Naive thymus-derived CD4-positive, alpha-beta T cell (primary cell): ENCODE measurements at regions of chr14 and their contacts with region 1.

Region 1: GRCh38 chr14:24442273-24443052 is at the start of gene SDR39U1:
- DNase-seq: peak; percentile 81 to 99 (median 98)
- ATAC-seq: peak; percentile 93
- H3K4me3 ChIP-seq: peak within 1 kb of the TSS; percentile 85
- H3K4me3 Mint-ChIP-seq: peak within 1 kb of the TSS; percentile 91 to 98 (median 95)
- H3K27ac ChIP-seq: peak within 1 kb of the TSS; percentile 98
- H3K27ac Mint-ChIP-seq: peak within 1 kb of the TSS; percentile 92 to 99 (median 98)
- H3K4me1 ChIP-seq: peaks cover 20 to 32% of the 10 kb centered on the region in 2 donors
- H3K4me1 Mint-ChIP-seq: peaks cover 27 to 57% (median 49%) of the 10 kb centered on the region in 7 donors
- H3K27me3 ChIP-seq: no peaks in the 10 kb centered on the region
- H3K27me3 Mint-ChIP-seq: peaks cover 0 to 3% (median 0%) of the 10 kb centered on the region in 5 donors
- total RNA-seq, gene SDR39U1: 64.7 to 137 (median 96.2) TPM

Region 2: DNA sequence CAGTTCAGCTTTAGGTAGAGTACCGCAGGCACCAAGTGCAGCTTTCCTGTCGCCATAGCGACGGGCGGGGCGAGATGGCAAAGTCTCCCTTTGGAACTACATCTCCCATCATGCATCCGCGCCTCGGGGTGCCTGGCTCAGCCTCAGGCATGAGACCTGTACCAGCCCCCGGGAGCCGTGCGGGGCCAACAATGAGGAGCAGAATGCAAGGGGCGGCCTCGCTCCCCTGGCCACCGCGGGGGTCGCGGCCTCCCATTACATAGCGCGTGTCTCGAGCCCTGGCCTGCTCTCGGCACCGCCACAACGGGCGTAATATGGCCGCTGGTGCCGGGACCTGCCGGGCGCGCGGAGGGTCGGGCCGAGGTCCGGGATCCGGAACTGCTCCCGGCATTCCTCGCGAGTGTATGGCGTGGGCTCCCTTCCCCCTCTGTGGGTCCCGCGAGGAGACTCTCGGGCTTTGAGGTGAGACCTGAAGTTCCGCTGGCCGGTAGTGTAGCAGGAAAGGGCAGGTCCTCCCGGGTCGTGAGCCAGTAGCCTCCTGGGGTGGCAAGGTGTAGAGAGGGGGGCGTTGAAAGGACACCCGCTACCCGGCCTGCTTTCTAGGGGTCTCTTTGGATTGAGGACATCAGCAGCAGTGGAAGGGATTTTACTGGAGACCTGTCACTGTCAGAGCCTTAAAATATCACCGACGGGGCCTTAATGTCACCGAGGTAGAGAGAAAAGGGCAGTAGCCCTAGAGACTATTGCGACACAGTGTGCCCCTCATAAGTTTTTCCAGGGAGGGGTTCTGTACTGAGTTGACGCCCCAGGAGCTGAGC is 886.4 kb before region 1 on chr14 and contains the start of gene THTPA:
- CTCF ChIA-PET with region 1: no interaction called
- POLR2A ChIA-PET with region 1: no interaction called
- intact Hi-C with region 1: loop called (anchors 2 to 10 kb)
- DNase-seq: peak; percentile 84 to 96 (median 89)
- ATAC-seq: peak; percentile 94
- H3K4me3 ChIP-seq: peak within 1 kb of the TSS; percentile 84
- H3K4me3 Mint-ChIP-seq: peak within 1 kb of the TSS; percentile 80 to 99 (median 96)
- H3K27ac ChIP-seq: peak within 1 kb of the TSS; percentile 83
- H3K27ac Mint-ChIP-seq: peak within 1 kb of the TSS; percentile 78 to 97 (median 94)
- H3K4me1 ChIP-seq: peaks cover 10 to 16% of the 10 kb centered on the region in 2 donors
- H3K4me1 Mint-ChIP-seq: peaks cover 18 to 45% (median 38%) of the 10 kb centered on the region in 7 donors
- H3K27me3 ChIP-seq: no peaks in the 10 kb centered on the region
- H3K27me3 Mint-ChIP-seq: peaks cover 0 to under 1% (median 0%) of the 10 kb centered on the region in 5 donors
- total RNA-seq, gene THTPA: 16.4 to 26.7 (median 19.2) TPM

Region 3: DNA sequence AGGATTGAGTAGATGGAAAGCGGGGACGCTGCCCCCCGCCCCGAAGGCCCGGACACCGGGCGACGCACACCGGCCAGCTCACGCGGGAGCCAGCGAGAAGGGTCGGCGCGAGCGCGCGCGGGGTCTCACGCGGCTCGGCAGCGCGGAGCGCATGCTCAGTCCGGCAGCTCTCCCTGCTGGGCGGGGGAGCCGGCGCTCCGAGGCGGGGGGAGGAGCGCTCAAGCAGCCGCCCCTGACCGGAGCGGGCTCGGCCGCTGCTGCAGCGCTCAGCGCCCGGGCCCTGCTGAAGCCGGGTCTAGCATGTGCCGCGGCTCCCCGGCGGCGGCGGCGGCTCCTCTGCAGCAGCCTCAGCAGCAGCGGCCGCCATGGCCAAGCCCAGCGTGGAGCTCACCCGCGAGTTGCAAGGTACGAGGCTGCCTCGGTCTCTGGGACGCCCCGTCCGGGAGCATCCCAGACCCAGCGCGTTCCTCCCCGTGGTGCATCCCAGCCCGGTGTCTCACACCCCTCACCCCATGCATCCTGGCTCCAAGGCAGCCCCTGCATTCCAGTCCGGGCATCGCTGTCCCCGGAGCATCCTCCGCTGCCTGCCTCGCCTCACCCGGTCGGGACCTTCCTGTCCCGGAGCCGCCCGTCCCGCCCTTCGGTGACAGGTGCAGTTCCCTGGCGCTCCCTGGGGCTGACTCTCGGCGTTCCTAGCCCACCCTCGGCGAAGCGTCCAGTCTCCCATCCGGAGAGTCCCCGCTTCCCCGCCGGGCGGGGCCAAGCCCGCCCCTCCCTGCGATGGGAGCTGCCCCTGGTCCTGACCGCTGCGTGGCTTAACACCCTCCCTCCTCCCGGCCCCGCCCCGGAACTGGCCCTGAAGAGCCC is 390.4 kb before region 1 on chr14 and contains the start of gene CARMIL3:
- CTCF ChIA-PET with region 1: no interaction called
- POLR2A ChIA-PET with region 1: no interaction called
- intact Hi-C with region 1: no loop called
- DNase-seq: peak; percentile 28 to 78 (median 47)
- ATAC-seq: peak; percentile 79
- H3K4me3 ChIP-seq: peak within 1 kb of the TSS; percentile 63
- H3K4me3 Mint-ChIP-seq: peak within 1 kb of the TSS; percentile 81 to 91 (median 87)
- H3K27ac ChIP-seq: peak within 1 kb of the TSS; percentile 53
- H3K27ac Mint-ChIP-seq: peak within 1 kb of the TSS in 6 of 9 donors; percentile 46 to 67 (median 56)
- H3K4me1 ChIP-seq: peaks cover 0 to 8% of the 10 kb centered on the region in 2 donors
- H3K4me1 Mint-ChIP-seq: peaks cover 8 to 17% (median 14%) of the 10 kb centered on the region in 7 donors
- H3K27me3 ChIP-seq: no peaks in the 10 kb centered on the region
- H3K27me3 Mint-ChIP-seq: peaks cover 12 to 44% (median 19%) of the 10 kb centered on the region in 5 donors
- total RNA-seq, gene CARMIL3: 0.08 to 1.7 (median 0.27) TPM

Region 4: GRCh38 chr14:24146978-24147760 is 295.3 kb before region 1 on chr14 and contains the start of gene RNF31:
- CTCF ChIA-PET with region 1: no interaction called
- POLR2A ChIA-PET with region 1: no interaction called
- intact Hi-C with region 1: loop called in 1 of 2 experiments (anchors 2 kb)
- DNase-seq: peak; percentile 88 to 98 (median 96)
- ATAC-seq: peak; percentile 95
- H3K4me3 ChIP-seq: peak within 1 kb of the TSS; percentile 98
- H3K4me3 Mint-ChIP-seq: peak within 1 kb of the TSS; percentile 91 to 100 (median 98)
- H3K27ac ChIP-seq: peak within 1 kb of the TSS; percentile 88
- H3K27ac Mint-ChIP-seq: peak within 1 kb of the TSS; percentile 94 to 98 (median 96)
- H3K4me1 ChIP-seq: peaks cover 35 to 47% of the 10 kb centered on the region in 2 donors
- H3K4me1 Mint-ChIP-seq: peaks cover 39 to 73% (median 61%) of the 10 kb centered on the region in 7 donors
- H3K27me3 ChIP-seq: no peaks in the 10 kb centered on the region
- H3K27me3 Mint-ChIP-seq: no peaks in the 10 kb centered on the region
- total RNA-seq, gene RNF31: 64.0 to 151 (median 95.4) TPM

Region 5: GRCh38 chr14:24241829-24242443 is 200.5 kb before region 1 on chr14:
- CTCF ChIA-PET with region 1: interaction called, 10 read pairs
- POLR2A ChIA-PET with region 1: interaction called, 9 read pairs
- intact Hi-C with region 1: loop called (anchors 1 kb)
- DNase-seq: peak in 7 of 9 donors; percentile 94 to 98 (median 97)
- ATAC-seq: peak; percentile 89
- H3K4me3 ChIP-seq: peak overlapping the region; percentile 78
- H3K4me3 Mint-ChIP-seq: peak overlapping the region; percentile 84 to 99 (median 98)
- H3K27ac ChIP-seq: peak overlapping the region; percentile 98
- H3K27ac Mint-ChIP-seq: peak overlapping the region; percentile 98 to 100 (median 100)
- H3K4me1 ChIP-seq: peaks cover 40 to 41% of the 10 kb centered on the region in 2 donors
- H3K4me1 Mint-ChIP-seq: peaks cover 42 to 71% (median 62%) of the 10 kb centered on the region in 7 donors
- H3K27me3 ChIP-seq: no peaks in the 10 kb centered on the region
- H3K27me3 Mint-ChIP-seq: no peaks in the 10 kb centered on the region

Region 6: GRCh38 chr14:24277606-24278321 is 164.7 kb before region 1 on chr14:
- CTCF ChIA-PET with region 1: no interaction called
- POLR2A ChIA-PET with region 1: no interaction called
- intact Hi-C with region 1: no loop called
- DNase-seq: no peak
- ATAC-seq: peak; percentile 59
- H3K4me3 ChIP-seq: no peak overlapping the region
- H3K4me3 Mint-ChIP-seq: no peak overlapping the region
- H3K27ac ChIP-seq: no peak overlapping the region
- H3K27ac Mint-ChIP-seq: peak overlapping the region in 4 of 9 donors; percentile 38 to 85 (median 70)
- H3K4me1 ChIP-seq: peaks cover 7 to 27% of the 10 kb centered on the region in 2 donors
- H3K4me1 Mint-ChIP-seq: peaks cover 46 to 56% (median 48%) of the 10 kb centered on the region in 7 donors
- H3K27me3 ChIP-seq: no peaks in the 10 kb centered on the region
- H3K27me3 Mint-ChIP-seq: no peaks in the 10 kb centered on the region

Region 7: DNA sequence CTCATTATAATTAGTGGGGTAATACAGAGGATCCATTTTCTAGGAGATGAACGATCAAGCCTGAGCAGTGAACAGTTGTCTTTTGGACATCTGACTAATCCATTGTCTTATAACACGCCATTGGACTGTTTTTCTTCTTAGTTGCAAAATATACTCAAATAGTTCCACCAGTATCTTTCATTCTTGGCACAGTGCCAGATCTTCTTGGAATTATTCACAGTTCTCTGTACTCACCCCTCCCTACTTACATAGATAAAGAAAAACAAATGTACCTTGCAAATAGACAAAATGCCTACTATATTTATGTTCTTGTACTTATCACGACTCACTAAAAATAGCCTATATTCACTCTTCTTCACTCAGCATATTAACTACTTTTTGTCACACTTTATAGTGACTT is 16.8 kb before region 1 on chr14:
- CTCF ChIA-PET with region 1: interaction called, 3 read pairs
- POLR2A ChIA-PET with region 1: interaction called, 105 read pairs
- intact Hi-C with region 1: no loop called
- DNase-seq: no peak
- ATAC-seq: no peak
- H3K4me3 ChIP-seq: no peak overlapping the region
- H3K4me3 Mint-ChIP-seq: peak overlapping the region in 3 of 10 donors; percentile 14 to 42 (median 35)
- H3K27ac ChIP-seq: no peak overlapping the region
- H3K27ac Mint-ChIP-seq: peak overlapping the region in 4 of 9 donors; percentile 2 to 27 (median 16)
- H3K4me1 ChIP-seq: peaks cover 16 to 34% of the 10 kb centered on the region in 2 donors
- H3K4me1 Mint-ChIP-seq: peaks cover 12 to 44% (median 35%) of the 10 kb centered on the region in 7 donors
- H3K27me3 ChIP-seq: no peaks in the 10 kb centered on the region
- H3K27me3 Mint-ChIP-seq: no peaks in the 10 kb centered on the region

Region 8: DNA sequence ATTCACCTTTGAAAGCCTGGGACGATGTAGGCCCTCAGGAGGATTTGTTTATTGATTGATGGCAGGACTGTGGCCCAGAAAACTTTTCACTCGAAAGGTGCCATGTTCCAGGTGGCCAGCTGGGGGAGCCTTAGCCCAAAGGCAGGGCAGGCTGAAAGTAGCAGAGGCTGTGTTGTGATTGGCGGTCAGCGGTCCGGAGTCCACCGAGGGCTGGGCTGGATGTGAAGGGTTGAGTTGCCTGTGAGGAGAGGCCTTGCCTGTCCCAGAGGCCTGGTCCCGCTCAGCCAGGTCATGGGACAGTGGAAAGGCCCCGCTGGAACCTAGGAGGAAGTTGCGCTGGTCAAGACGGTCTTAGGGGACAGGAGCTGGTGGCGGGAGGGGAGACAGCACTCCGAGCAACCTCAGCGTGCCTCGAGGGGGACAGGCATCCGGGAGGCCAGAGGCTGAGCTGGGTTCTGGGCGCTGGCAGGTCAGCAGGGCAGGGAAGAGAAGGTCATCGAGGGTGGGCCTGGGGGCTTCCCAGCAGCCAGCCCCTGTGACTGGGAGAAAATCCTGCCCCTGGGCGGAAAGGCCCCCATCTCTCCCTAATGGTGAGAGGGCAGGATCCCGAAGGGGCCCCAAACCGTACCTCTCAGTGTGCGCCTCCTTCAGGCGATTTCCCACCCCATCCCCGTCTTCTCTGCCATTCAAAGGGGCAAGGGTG is 39.3 kb after region 1 on chr14:
- CTCF ChIA-PET with region 1: no interaction called
- POLR2A ChIA-PET with region 1: interaction called, 4 read pairs
- intact Hi-C with region 1: loop called in 1 of 2 experiments (anchors 2 kb)
- DNase-seq: peak in 6 of 9 donors; percentile 24 to 51 (median 35)
- ATAC-seq: peak; percentile 71
- H3K4me3 ChIP-seq: peak overlapping the region; percentile 26
- H3K4me3 Mint-ChIP-seq: peak overlapping the region in 8 of 10 donors; percentile 39 to 81 (median 60)
- H3K27ac ChIP-seq: no peak overlapping the region
- H3K27ac Mint-ChIP-seq: peak overlapping the region in 7 of 9 donors; percentile 13 to 85 (median 70)
- H3K4me1 ChIP-seq: peaks cover 12 to 19% of the 10 kb centered on the region in 2 donors
- H3K4me1 Mint-ChIP-seq: peaks cover 0 to 28% (median 15%) of the 10 kb centered on the region in 7 donors
- H3K27me3 ChIP-seq: no peaks in the 10 kb centered on the region
- H3K27me3 Mint-ChIP-seq: peaks cover 0 to 3% (median 0%) of the 10 kb centered on the region in 5 donors

Region 9: GRCh38 chr14:24535737-24536136 is 93.3 kb after region 1 on chr14:
- CTCF ChIA-PET with region 1: no interaction called
- POLR2A ChIA-PET with region 1: no interaction called
- intact Hi-C with region 1: no loop called
- DNase-seq: no peak
- ATAC-seq: peak; percentile 49
- H3K4me3 ChIP-seq: no peak overlapping the region
- H3K4me3 Mint-ChIP-seq: no peak overlapping the region
- H3K27ac ChIP-seq: no peak overlapping the region
- H3K27ac Mint-ChIP-seq: no peak overlapping the region
- H3K4me1 ChIP-seq: no peaks in the 10 kb centered on the region
- H3K4me1 Mint-ChIP-seq: peaks cover 0 to 7% (median 0%) of the 10 kb centered on the region in 7 donors
- H3K27me3 ChIP-seq: peaks cover 0 to 3% of the 10 kb centered on the region in 2 donors
- H3K27me3 Mint-ChIP-seq: peaks cover 7 to 36% (median 19%) of the 10 kb centered on the region in 5 donors

Region 10: GRCh38 chr14:25267186-25267585 is 824.7 kb after region 1 on chr14:
- CTCF ChIA-PET with region 1: no interaction called
- POLR2A ChIA-PET with region 1: no interaction called
- intact Hi-C with region 1: no loop called
- DNase-seq: no peak
- ATAC-seq: no peak
- H3K4me3 ChIP-seq: no peak overlapping the region
- H3K4me3 Mint-ChIP-seq: no peak overlapping the region
- H3K27ac ChIP-seq: no peak overlapping the region
- H3K27ac Mint-ChIP-seq: no peak overlapping the region
- H3K4me1 ChIP-seq: no peaks in the 10 kb centered on the region
- H3K4me1 Mint-ChIP-seq: no peaks in the 10 kb centered on the region
- H3K27me3 ChIP-seq: no peaks in the 10 kb centered on the region
- H3K27me3 Mint-ChIP-seq: peaks cover 0 to 16% (median 0%) of the 10 kb centered on the region in 5 donors